IMR-90 (cell line): ENCODE measurements at regions of chr9 and their contacts with region 1.

Region 1: GRCh38 chr9:108053555-108054061 is 564.0 kb upstream of the KLF4 start:
- DNase-seq: peak; percentile 80
- ATAC-seq: 0 out of 2 replicates have a peak, but pooled peaks have one; percentile 2
- H3K4me3 ChIP-seq: no peak overlapping the region
- H3K27ac ChIP-seq: peak overlapping the region; percentile 70; the same call in 1 of the 2 replicates
- H3K4me1 ChIP-seq: peaks cover 32% of the 10 kb centered on the region
- H3K27me3 ChIP-seq: no peaks in the 10 kb centered on the region
- CTCF ChIP-seq: no peak
- POLR2A ChIP-seq: no peak
- RAD21 ChIP-seq: no peak

Region 2: GRCh38 chr9:106962615-106963363 is 1090.8 kb before region 1 on chr9:
- CTCF ChIA-PET with region 1: no interaction called
- POLR2A ChIA-PET with region 1: no interaction called
- dilution Hi-C with region 1: no loop called
- in situ Hi-C with region 1: no loop called
- intact Hi-C with region 1: no loop called
- DNase-seq: no peak
- ATAC-seq: no peak
- H3K4me3 ChIP-seq: no peak overlapping the region
- H3K27ac ChIP-seq: no peak overlapping the region
- H3K4me1 ChIP-seq: peaks cover 3% of the 10 kb centered on the region; the same call in 1 of the 2 replicates
- H3K27me3 ChIP-seq: no peaks in the 10 kb centered on the region
- CTCF ChIP-seq: no peak
- POLR2A ChIP-seq: no peak
- RAD21 ChIP-seq: no peak

Region 3: DNA sequence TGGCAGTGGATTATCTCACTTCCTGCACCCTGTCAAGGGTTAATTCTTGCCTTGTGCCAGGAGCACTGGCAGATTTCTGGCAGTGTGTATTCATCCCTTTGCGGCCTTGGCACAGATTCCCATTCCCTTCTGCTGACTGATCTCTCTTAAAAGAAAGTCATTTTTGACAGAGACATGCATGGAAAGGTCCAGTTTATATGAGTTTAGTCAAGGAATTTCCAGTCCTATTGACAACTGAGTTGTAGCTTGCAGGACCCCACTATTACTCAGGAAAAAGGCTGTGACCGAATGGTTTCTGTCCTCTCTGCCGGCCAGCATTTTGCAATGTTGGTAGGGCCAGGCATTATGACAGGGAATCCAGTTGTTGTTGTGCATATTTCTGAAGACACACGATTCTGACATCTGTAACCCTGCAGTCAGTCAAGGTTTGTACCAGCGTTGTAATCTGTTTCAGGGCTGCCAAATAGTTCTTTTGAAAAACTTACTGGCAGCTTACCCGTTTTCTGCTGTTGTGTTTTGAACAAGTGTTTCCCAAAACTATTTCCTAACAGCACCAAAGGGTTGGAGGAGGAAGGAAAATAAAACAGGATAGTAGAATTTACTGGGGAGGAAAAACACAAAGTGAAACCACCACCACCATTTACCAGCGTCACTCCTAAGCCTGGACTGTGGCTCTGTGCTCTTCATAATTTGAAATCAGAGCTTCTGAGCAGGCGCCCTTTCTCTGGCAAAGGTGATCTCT is 320.7 kb before region 1 on chr9:
- CTCF ChIA-PET with region 1: no interaction called
- POLR2A ChIA-PET with region 1: no interaction called
- dilution Hi-C with region 1: no loop called
- in situ Hi-C with region 1: loop called (anchors 10 kb)
- intact Hi-C with region 1: loop called (anchors 5 kb)
- DNase-seq: peak; percentile 73
- ATAC-seq: peak; percentile 38
- H3K4me3 ChIP-seq: peak overlapping the region; percentile 23; the same call in 1 of the 2 replicates
- H3K27ac ChIP-seq: peak overlapping the region; percentile 98
- H3K4me1 ChIP-seq: peaks cover 24% of the 10 kb centered on the region
- H3K27me3 ChIP-seq: no peaks in the 10 kb centered on the region
- CTCF ChIP-seq: no peak
- POLR2A ChIP-seq: no peak
- RAD21 ChIP-seq: no peak

Region 4: DNA sequence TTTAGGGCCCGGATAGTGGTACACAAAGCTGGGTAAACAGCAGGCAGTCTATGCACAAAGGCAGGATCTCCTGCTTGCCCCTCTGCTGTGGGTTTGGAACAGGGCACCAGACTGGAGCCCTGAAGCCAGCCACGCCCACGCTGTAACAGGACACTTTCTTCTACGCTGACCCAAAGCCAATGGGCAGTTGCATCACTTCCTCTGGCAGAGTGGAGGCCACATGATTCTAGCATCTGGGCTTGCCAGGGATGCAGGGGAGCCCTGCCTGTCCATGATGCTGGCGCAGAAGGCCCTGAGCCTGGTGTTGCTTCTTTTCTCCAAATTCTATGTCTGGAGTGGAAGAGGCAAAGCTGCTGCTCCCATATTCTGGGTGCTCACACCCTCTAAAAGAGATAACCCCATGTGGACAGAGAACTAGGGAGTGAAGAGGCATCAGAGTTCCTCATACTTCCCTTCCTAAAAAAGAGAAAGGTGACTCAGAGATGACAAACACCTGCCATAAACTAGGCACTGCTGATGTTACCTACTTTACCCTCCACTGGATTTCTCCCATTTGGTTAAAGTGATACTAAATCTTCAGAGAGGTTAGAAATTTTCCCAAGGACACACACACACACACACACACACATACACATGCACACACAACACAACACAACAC is 303.7 kb before region 1 on chr9:
- CTCF ChIA-PET with region 1: no interaction called
- POLR2A ChIA-PET with region 1: no interaction called
- dilution Hi-C with region 1: no loop called
- in situ Hi-C with region 1: no loop called
- intact Hi-C with region 1: loop called (anchors 2 kb)
- DNase-seq: peak; percentile 96
- ATAC-seq: peak; percentile 78
- H3K4me3 ChIP-seq: no peak overlapping the region
- H3K27ac ChIP-seq: peak overlapping the region; percentile 81
- H3K4me1 ChIP-seq: peaks cover 19% of the 10 kb centered on the region
- H3K27me3 ChIP-seq: no peaks in the 10 kb centered on the region
- CTCF ChIP-seq: no peak
- POLR2A ChIP-seq: no peak
- RAD21 ChIP-seq: no peak

Region 5: DNA sequence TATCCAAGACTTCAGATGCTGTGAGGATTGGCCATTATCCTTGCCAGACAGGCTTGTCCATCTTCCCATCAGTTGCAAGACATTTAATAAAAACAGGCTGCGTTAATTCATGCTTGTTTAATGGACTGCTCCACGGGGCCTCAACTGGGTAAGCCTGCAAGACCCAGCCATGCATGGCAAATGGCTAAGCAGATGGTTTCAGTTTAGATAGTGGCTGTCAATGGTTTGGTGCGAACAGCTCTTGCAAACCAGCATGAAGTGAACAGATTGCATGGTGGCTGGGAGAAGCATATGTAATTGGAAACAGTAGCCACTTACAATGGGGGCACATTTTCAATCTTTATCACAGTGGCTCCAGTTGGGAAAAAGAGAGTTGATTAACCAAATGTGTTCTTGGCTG is 64.2 kb after region 1 on chr9:
- CTCF ChIA-PET with region 1: no interaction called
- POLR2A ChIA-PET with region 1: no interaction called
- dilution Hi-C with region 1: no loop called
- in situ Hi-C with region 1: no loop called
- intact Hi-C with region 1: no loop called
- DNase-seq: no peak
- ATAC-seq: no peak
- H3K4me3 ChIP-seq: no peak overlapping the region
- H3K27ac ChIP-seq: no peak overlapping the region
- H3K4me1 ChIP-seq: peaks cover 2% of the 10 kb centered on the region; the same call in 1 of the 2 replicates
- H3K27me3 ChIP-seq: no peaks in the 10 kb centered on the region
- CTCF ChIP-seq: no peak
- POLR2A ChIP-seq: no peak
- RAD21 ChIP-seq: no peak

Region 6: GRCh38 chr9:108272349-108272899 is 218.8 kb after region 1 on chr9:
- CTCF ChIA-PET with region 1: no interaction called
- POLR2A ChIA-PET with region 1: no interaction called
- dilution Hi-C with region 1: no loop called
- in situ Hi-C with region 1: no loop called
- intact Hi-C with region 1: loop called (anchors 5 kb)
- DNase-seq: peak; percentile 39
- ATAC-seq: peak; percentile 82
- H3K4me3 ChIP-seq: peak overlapping the region; percentile 24; the same call in 1 of the 2 replicates
- H3K27ac ChIP-seq: peak overlapping the region; percentile 88; the same call in 1 of the 2 replicates
- H3K4me1 ChIP-seq: peaks cover 7% of the 10 kb centered on the region; the same call in 1 of the 2 replicates
- H3K27me3 ChIP-seq: no peaks in the 10 kb centered on the region
- CTCF ChIP-seq: peak; percentile 58
- POLR2A ChIP-seq: no peak
- RAD21 ChIP-seq: peak; percentile 70

Region 7: GRCh38 chr9:108478431-108478837 is 424.8 kb after region 1 on chr9:
- CTCF ChIA-PET with region 1: interaction called, 3 read pairs
- POLR2A ChIA-PET with region 1: no interaction called
- dilution Hi-C with region 1: no loop called
- in situ Hi-C with region 1: no loop called
- intact Hi-C with region 1: loop called (anchors 10 kb)
- DNase-seq: peak; percentile 90
- ATAC-seq: peak; percentile 56
- H3K4me3 ChIP-seq: no peak overlapping the region
- H3K27ac ChIP-seq: peak overlapping the region; percentile 95
- H3K4me1 ChIP-seq: peaks cover 18% of the 10 kb centered on the region
- H3K27me3 ChIP-seq: no peaks in the 10 kb centered on the region
- CTCF ChIP-seq: no peak
- POLR2A ChIP-seq: no peak
- RAD21 ChIP-seq: no peak